ENCODE measurements at regions of chr13 and their contacts with region 1.

Region 1: DNA sequence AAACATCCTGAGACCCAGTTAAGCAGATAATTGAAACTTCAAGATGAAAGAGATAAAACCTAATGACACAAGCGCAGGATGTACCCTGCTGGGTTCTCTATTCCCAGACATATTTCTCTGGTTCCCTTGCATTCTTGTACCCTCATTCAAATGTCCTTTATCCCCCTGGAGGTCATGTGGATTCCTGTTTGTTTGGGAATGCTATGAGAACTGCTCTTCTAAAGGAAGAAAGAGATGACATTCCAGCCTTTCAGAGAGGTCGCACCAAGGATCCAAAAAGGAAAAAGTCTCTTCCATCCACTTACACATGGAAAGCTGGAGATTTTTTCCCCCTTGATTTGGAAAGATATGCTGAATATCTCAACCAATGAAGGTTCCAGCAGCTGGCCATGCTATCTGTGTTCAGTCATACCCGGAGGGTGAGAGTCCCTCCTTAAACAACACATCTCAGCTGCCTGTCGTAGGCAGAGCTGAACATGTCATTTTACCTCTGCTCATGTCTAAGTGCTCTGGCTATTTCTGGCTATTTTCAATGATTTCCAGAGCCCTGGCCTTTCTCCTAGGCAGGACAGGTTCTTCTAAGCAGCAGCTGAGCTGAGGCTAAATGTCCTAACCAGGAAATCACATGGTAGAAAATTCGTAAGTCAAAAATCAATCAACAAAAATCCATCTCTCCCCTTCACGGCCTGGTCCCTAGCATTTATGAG is 52.5 kb downstream of the C13orf42 start:
- DNase-seq: peak in 1 of 2 experiments; percentile 38
- H3K4me3 ChIP-seq: no peak overlapping the region
- H3K27ac ChIP-seq: no peak overlapping the region
- H3K4me1 ChIP-seq: peaks cover 0 to 6% (median 2%) of the 10 kb centered on the region in 4 experiments; a peak in 3 of 7 replicates
- H3K27me3 ChIP-seq: no peaks in the 10 kb centered on the region
- CTCF ChIP-seq: no peak
- EP300 ChIP-seq: no peak
- POLR2A ChIP-seq: no peak
- RAD21 ChIP-seq: no peak

Region 2: DNA sequence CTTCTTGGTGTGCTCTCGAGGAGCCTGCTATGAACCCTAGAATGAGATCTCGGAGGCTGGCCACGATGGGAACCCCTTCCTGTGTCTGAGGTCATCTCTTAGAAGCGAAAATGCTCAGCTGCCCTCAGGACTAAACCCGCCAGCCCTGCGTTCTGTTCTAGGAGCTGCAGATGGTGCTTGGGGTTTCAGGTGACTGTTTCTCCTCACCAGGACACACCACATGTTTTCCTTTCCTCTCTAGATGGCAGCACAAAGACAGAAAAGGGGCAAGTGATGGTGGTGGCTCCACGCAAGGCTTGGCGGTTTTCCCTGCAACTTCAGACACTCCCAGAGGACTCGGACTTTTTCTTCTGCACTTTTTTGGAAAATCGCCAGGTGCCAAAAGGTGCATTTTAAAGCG is 88.9 kb before region 1 on chr13:
- CTCF ChIA-PET with region 1: interaction called, 15 read pairs
- POLR2A ChIA-PET with region 1: no interaction called
- DNase-seq: peak in 1 of 2 experiments; percentile 57
- H3K4me3 ChIP-seq: no peak overlapping the region
- H3K27ac ChIP-seq: no peak overlapping the region
- H3K4me1 ChIP-seq: no peaks in the 10 kb centered on the region
- H3K27me3 ChIP-seq: no peaks in the 10 kb centered on the region
- CTCF ChIP-seq: peak; percentile 29 to 62 (median 60)
- EP300 ChIP-seq: no peak
- POLR2A ChIP-seq: no peak
- RAD21 ChIP-seq: peak; percentile 70 to 76

Region 3: DNA sequence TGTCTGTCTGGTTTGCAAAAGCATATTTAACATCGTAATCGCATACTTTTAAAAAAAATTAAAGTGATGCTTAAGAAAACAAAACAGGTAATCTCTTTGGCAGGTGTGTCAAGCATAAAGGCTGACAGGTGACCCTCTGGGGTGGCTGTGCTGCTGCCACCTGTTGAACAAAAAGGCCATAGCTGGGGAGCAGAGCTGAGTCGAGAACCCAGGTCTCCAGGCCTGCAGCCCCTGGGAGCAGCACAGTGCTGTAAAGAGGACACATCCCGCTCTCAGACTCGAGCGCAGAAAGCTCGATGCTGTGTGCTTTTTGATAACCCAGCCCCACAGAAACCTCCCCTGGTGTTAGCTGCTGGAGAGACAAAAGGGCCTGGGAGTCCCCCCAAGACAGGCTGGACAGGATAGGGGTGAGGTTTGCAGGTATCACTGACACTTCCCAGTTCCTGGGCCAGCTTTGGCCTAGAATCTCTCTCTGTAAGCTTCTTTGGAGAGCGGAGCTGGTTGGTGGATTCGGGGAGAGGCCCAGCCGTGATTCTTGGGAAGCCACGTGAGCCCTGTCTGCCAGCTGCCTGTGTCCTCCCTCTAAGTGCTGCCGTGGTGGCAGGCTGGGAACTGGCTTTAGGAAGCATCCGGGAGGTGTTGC is 14.5 kb before region 1 on chr13:
- CTCF ChIA-PET with region 1: interaction called, 23 read pairs
- POLR2A ChIA-PET with region 1: interaction called, 3 read pairs
- DNase-seq: peak in 1 of 2 experiments; percentile 46
- H3K4me3 ChIP-seq: no peak overlapping the region
- H3K27ac ChIP-seq: no peak overlapping the region
- H3K4me1 ChIP-seq: no peaks in the 10 kb centered on the region
- H3K27me3 ChIP-seq: no peaks in the 10 kb centered on the region
- CTCF ChIP-seq: peak; percentile 31 to 49 (median 39); a peak in 2 of 4 replicates
- EP300 ChIP-seq: no peak
- POLR2A ChIP-seq: no peak
- RAD21 ChIP-seq: peak; percentile 25 to 49; a peak in 2 of 4 replicates

Measured in H1 (cell line).